SK-N-SH (cell line): ENCODE measurements at regions of chr1 and their contacts with region 1.

Region 1: GRCh38 chr1:157090196-157090647 is 9.4 kb downstream of the ETV3L start:
- DNase-seq: peak; percentile 88
- H3K4me3 ChIP-seq: peak overlapping the region in 1 of 2 experiments; percentile 22; a peak in 1 of 4 replicates
- H3K27ac ChIP-seq: no peak overlapping the region
- H3K4me1 ChIP-seq: peaks cover 6 to 7% of the 10 kb centered on the region in 2 experiments; a peak in 2 of 4 replicates
- H3K27me3 ChIP-seq: no peaks in the 10 kb centered on the region
- CTCF ChIP-seq: peak; percentile 94
- EP300 ChIP-seq: no peak
- RAD21 ChIP-seq: peak; percentile 97

Region 2: DNA sequence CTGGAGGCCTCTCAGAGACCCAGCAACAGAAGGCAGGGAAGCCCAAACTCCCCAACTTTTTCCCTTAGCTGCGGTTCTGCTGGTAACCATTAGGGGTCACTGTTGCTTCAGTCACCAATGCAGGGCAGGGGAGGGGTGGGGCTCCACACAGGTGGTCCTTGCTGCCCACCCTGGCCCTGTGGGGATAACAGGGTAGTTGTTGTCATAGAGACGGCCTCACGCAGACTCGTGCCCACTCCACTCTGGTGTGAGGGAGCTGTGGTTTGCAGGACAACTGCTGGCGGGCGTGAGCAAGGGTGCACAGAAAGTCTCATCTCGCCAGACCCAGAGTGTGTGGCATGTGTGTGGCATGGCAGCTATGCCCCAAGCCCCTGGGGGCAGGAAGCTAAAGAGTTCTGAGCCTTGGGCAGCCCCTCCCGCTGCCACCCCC is 251.2 kb before region 1 on chr1:
- CTCF ChIA-PET with region 1: no interaction called
- POLR2A ChIA-PET with region 1: no interaction called
- DNase-seq: peak; percentile 81
- H3K4me3 ChIP-seq: no peak overlapping the region; a peak in 1 of 4 replicates
- H3K27ac ChIP-seq: peak overlapping the region in 1 of 2 experiments; percentile 43; a peak in 2 of 4 replicates
- H3K4me1 ChIP-seq: peaks cover 0 to 54% of the 10 kb centered on the region in 2 experiments; a peak in 2 of 4 replicates
- H3K27me3 ChIP-seq: peaks cover 9% of the 10 kb centered on the region; the same call in 1 of the 2 replicates
- CTCF ChIP-seq: peak; percentile 94
- EP300 ChIP-seq: no peak; a peak in 1 of 4 replicates
- RAD21 ChIP-seq: peak; percentile 84

Region 3: GRCh38 chr1:156936721-156937220 is 153.5 kb before region 1 on chr1:
- CTCF ChIA-PET with region 1: interaction called, 15 read pairs
- POLR2A ChIA-PET with region 1: no interaction called
- DNase-seq: no peak
- H3K4me3 ChIP-seq: no peak overlapping the region
- H3K27ac ChIP-seq: no peak overlapping the region
- H3K4me1 ChIP-seq: no peaks in the 10 kb centered on the region
- H3K27me3 ChIP-seq: no peaks in the 10 kb centered on the region
- CTCF ChIP-seq: no peak
- EP300 ChIP-seq: no peak
- RAD21 ChIP-seq: no peak

Region 4: GRCh38 chr1:157105988-157106812 is 16.0 kb after region 1 on chr1:
- CTCF ChIA-PET with region 1: interaction called, 30 read pairs
- POLR2A ChIA-PET with region 1: no interaction called
- DNase-seq: no peak
- H3K4me3 ChIP-seq: no peak overlapping the region
- H3K27ac ChIP-seq: peak overlapping the region in 1 of 2 experiments; percentile 47; a peak in 2 of 4 replicates
- H3K4me1 ChIP-seq: peaks cover 0 to 17% of the 10 kb centered on the region in 2 experiments; a peak in 1 of 4 replicates
- H3K27me3 ChIP-seq: no peaks in the 10 kb centered on the region
- CTCF ChIP-seq: no peak
- EP300 ChIP-seq: no peak
- RAD21 ChIP-seq: no peak

Region 5: DNA sequence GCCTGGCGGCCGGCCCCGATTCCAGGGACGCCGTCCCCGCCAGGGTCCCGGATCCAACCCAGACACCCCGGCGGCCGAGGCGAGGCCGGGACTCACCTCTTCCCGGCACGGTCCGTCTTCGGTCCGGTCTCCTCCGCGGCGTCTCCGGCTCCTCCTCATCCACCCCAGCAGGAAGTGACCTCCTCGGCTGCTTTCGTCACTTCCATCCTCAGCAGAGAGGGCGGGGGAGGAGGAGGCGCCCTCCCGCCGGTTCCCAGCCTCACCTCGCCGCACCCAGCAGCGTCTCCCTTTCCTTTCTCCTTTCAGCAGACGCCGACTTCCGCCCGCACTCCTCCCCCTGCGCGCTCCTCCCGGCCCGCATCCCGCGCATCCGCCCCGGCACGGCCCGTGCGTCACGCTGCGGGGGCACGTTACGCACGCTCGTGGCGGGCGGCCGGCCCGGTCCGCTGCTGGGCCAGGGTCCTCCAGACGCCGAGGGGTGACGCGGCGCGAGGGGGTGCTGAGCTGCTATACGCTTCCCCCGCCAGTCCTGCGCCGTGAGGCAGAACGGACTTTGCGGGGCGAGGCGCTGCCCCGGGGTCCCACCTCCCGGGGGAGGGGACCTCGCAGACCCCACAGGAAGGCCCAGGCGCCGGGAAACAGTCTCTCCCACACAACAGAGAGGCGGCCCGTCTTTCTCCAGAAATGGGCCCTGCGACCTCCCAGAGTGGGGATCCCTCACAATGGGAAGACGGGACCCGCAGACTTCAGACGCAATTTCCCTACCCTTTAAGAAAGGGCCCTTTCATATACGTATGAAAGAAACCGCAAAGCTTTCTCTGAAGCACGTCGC is 48.2 kb after region 1 on chr1 and contains the start of gene ETV3:
- CTCF ChIA-PET with region 1: interaction called, 57 read pairs
- POLR2A ChIA-PET with region 1: interaction called, 5 read pairs
- DNase-seq: peak; percentile 95
- H3K4me3 ChIP-seq: peak within 1 kb of the TSS; percentile 89 to 91
- H3K27ac ChIP-seq: peak within 1 kb of the TSS; percentile 73 to 96
- H3K4me1 ChIP-seq: peaks cover 13 to 33% of the 10 kb centered on the region in 2 experiments; a peak in 3 of 4 replicates
- H3K27me3 ChIP-seq: no peaks in the 10 kb centered on the region
- CTCF ChIP-seq: no peak
- EP300 ChIP-seq: no peak
- RAD21 ChIP-seq: no peak
- polyA plus RNA-seq, gene ETV3: 5.4 and 8.5 TPM in 2 replicates

Region 6: DNA sequence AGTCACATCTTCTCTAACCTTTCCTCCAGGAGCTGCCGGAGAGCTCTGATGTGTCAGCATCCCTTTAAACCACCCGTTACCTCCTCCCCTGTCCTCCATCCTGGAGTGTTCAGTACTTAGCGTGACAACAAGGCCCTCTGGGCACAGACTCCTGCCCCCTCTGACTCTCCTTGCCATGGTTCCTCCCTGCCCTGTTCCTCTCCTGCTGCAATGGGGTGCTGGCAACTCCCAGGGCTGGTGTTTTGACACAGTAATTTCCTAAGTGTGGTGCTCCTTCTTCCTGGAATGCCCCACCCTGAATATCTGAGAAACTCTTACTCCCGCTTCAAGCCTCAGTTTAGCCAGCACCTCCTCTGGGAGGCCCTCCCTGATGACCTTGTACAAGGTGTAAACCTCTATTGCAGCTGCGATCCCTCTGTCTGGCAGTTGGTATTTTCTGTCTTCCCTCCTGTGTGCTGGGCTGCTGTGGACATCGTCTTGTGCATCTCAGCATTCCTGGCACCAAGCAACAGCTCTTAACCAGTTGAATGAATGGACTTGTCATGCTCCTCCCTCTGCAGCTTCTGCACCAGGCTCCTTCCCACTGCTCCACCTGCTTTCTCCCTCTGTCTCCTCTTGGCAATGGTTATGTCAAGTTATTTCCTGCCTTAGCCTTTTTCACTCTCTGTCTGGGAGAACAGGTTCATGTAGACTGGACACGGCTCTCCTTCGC is 96.2 kb after region 1 on chr1:
- CTCF ChIA-PET with region 1: interaction called, 15 read pairs
- POLR2A ChIA-PET with region 1: no interaction called
- DNase-seq: no peak
- H3K4me3 ChIP-seq: no peak overlapping the region
- H3K27ac ChIP-seq: no peak overlapping the region
- H3K4me1 ChIP-seq: no peaks in the 10 kb centered on the region
- H3K27me3 ChIP-seq: peaks cover 87% of the 10 kb centered on the region
- CTCF ChIP-seq: no peak
- EP300 ChIP-seq: no peak
- RAD21 ChIP-seq: no peak